KBM-7 (cell line): ENCODE measurements at regions of chr10 and their contacts with region 1.

Region 1: DNA sequence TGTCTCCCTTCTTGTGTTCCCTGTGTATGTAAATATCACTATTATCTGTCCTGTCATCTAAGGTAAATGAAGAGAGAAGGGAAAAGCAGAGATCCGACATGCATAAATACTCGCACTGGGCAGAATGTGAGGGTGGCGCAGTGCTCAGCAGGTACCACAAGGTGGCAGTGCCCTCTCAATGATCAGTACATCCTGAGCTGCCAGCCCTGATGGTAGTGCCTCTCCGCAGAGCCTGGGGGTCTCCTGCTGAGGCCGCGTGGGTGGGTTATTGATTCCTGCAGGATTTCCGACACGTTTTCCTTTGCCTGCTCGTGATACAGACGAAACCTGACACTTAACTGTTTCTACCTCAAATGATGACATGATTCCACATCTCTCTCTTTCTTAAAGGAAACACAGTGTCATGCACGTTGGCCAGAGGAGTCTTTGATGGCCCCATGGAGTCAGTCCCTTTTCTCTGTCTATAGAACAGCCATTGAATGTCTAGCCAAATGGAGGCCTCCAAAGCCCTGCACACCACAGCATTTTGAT is 19.8 kb downstream of the RGR start:
- DNase-seq: peak; percentile 75

Region 2: GRCh38 chr10:84562592-84562991 is 297.9 kb after region 1 on chr10:
- in situ Hi-C with region 1: no loop called
- DNase-seq: no peak

Region 3: GRCh38 chr10:84715911-84716310 is 451.2 kb after region 1 on chr10:
- in situ Hi-C with region 1: loop called (anchors 25 kb)
- DNase-seq: peak; percentile 58